ENCODE measurements at regions of chr7 and their contacts with region 1.

Region 1: GRCh38 chr7:82789867-82790609 is 346.5 kb upstream of the CACNA2D1 start:
- DNase-seq: peak; percentile 7 to 55
- H3K4me3 ChIP-seq: no peak overlapping the region
- H3K27ac ChIP-seq: no peak overlapping the region
- H3K4me1 ChIP-seq: peaks cover 16% of the 10 kb centered on the region
- H3K27me3 ChIP-seq: no peaks in the 10 kb centered on the region
- CTCF ChIP-seq: no peak

Region 2: DNA sequence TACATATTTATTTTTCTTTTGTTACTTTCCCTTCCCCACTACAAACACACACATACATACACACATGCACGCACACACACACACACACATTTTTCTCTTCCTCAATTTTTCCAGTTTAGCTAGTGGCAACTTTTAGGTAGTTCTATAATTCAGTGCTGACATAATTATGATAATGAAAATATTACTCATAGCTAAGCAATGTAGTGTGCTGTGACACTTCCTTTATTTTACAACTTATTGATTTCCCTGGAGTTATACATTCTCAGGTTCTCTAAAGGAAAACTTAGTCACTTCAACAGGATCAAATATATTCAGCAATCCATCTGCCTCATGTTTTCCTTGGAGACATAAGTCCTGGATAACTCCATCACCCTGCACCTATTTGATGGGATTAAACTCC is 498.1 kb before region 1 on chr7:
- CTCF ChIA-PET with region 1: no interaction called
- POLR2A ChIA-PET with region 1: no interaction called
- intact Hi-C with region 1: no loop called
- DNase-seq: peak in 1 of 2 experiments; percentile 42
- H3K4me3 ChIP-seq: no peak overlapping the region
- H3K27ac ChIP-seq: no peak overlapping the region
- H3K4me1 ChIP-seq: no peaks in the 10 kb centered on the region
- H3K27me3 ChIP-seq: no peaks in the 10 kb centered on the region
- CTCF ChIP-seq: no peak

Region 3: GRCh38 chr7:82851121-82851520 is 61.1 kb after region 1 on chr7:
- CTCF ChIA-PET with region 1: no interaction called
- POLR2A ChIA-PET with region 1: no interaction called
- intact Hi-C with region 1: no loop called
- DNase-seq: no peak
- H3K4me3 ChIP-seq: no peak overlapping the region
- H3K27ac ChIP-seq: no peak overlapping the region
- H3K4me1 ChIP-seq: no peaks in the 10 kb centered on the region
- H3K27me3 ChIP-seq: no peaks in the 10 kb centered on the region
- CTCF ChIP-seq: no peak

Region 4: GRCh38 chr7:83663131-83663530 is 873.1 kb after region 1 on chr7:
- CTCF ChIA-PET with region 1: no interaction called
- POLR2A ChIA-PET with region 1: no interaction called
- intact Hi-C with region 1: loop called (anchors 5 kb)
- DNase-seq: no peak
- H3K4me3 ChIP-seq: no peak overlapping the region
- H3K27ac ChIP-seq: no peak overlapping the region
- H3K4me1 ChIP-seq: no peaks in the 10 kb centered on the region
- H3K27me3 ChIP-seq: no peaks in the 10 kb centered on the region
- CTCF ChIP-seq: no peak

Measured in PC-9 (cell line).